PC-3 (cell line): ENCODE measurements at regions of chr1 and their contacts with region 1.

Region 1: GRCh38 chr1:21028520-21029145 is 148.1 kb downstream of the EIF4G3 start:
- DNase-seq: no peak
- ATAC-seq: no peak
- H3K4me3 ChIP-seq: no peak overlapping the region
- H3K27ac ChIP-seq: no peak overlapping the region
- H3K4me1 ChIP-seq: no peaks in the 10 kb centered on the region
- H3K27me3 ChIP-seq: no peaks in the 10 kb centered on the region
- CTCF ChIP-seq: no peak

Region 2: DNA sequence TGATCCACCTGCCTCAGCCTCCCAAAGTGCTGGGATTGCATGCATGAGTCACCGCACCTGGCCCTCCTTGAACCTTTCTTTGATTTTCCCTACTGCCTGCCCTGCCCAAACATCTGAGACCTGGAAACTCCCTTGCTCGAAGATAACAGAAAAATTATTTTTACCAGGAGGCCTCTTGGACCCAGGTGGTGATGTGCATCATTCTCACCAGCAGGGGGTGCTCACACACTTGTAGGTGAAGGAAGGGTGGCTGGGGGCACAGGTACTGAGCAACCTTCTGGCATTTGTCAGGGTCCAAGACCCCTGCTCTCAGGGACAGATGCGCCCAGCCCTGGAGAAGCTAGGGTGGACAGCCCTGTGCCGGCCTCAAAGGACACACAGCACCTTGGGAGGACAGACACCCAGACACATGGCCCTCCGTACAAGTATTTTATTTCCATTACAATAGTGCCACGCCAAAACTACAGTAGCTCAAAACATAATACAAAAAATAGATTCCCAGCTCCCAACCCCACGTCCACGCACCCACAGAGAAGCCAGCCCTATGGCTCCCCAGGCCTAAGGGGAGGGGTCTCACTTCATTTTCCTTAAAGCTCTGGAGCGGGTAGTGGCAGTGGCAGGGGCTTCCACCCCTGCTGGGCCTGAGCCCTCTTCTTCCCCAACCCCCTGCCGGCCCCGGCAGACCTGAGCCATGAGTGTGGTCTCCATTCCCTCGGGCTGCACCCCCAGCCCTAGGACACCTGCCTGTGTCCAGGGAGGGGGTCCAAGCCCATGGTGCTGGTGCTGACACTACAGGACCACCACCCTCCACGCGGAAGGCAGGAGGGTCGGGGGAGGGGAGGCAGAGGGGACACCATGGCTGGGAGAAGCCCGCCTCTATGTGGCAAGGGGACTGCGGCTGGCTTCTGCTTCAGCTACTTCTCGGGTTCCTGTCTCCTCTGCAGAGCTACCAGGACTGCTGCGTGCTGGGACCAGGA is 188.5 kb after region 1 on chr1:
- CTCF ChIA-PET with region 1: no interaction called
- POLR2A ChIA-PET with region 1: interaction called, 30 read pairs
- intact Hi-C with region 1: no loop called
- DNase-seq: peak; percentile 78
- ATAC-seq: peak; percentile 59
- H3K4me3 ChIP-seq: no peak overlapping the region
- H3K27ac ChIP-seq: no peak overlapping the region
- H3K4me1 ChIP-seq: peaks cover 3% of the 10 kb centered on the region; the same call in 1 of the 2 replicates
- H3K27me3 ChIP-seq: no peaks in the 10 kb centered on the region
- CTCF ChIP-seq: peak; percentile 92

Region 3: DNA sequence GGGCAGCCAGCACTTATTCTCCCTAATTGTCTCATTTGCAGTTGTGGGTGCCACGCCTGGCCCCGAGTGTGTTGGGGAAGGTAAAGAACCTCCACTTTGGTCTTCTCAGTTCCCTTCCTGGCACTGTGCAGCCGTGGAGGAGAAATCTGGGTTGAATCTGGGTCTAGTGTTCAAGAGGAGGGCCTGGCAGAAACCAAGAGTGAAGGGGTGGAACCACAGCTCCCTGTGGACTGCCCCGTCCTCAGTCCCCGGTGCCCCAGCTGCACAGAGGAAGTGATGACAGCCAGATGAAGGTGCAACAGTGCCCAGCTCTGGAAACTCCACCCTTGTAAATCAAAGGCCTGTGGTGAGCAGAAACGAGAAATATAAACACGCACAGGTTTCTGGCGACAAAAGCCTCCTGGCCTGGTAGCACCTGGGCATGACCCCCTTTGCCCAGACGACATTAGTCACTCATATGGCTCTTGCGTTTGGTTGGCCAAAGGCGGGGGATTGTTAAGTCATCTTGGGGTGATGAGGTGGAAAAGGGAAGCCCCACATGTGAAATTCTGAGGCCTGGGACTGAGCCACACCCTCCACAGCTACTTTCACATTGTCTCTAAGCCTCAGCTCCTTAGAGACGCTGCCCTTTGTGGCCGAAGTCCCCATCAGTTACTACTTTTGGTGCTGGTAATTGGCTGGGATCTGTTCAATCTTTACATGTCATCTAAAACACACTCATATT is 265.8 kb after region 1 on chr1:
- CTCF ChIA-PET with region 1: no interaction called
- POLR2A ChIA-PET with region 1: no interaction called
- intact Hi-C with region 1: no loop called
- DNase-seq: peak; percentile 19
- ATAC-seq: no peak
- H3K4me3 ChIP-seq: no peak overlapping the region
- H3K27ac ChIP-seq: peak overlapping the region; percentile 19
- H3K4me1 ChIP-seq: peaks cover 35% of the 10 kb centered on the region
- H3K27me3 ChIP-seq: no peaks in the 10 kb centered on the region
- CTCF ChIP-seq: no peak